HEK293 (cell line): ENCODE measurements at regions of chr2 and their contacts with region 1.

Region 1: GRCh38 chr2:68925295-68925896 is 27.3 kb downstream of the GKN2 start:
- H3K4me3 ChIP-seq: no peak overlapping the region
- H3K27ac ChIP-seq: no peak overlapping the region
- H3K4me1 ChIP-seq: no peaks in the 10 kb centered on the region
- CTCF ChIP-seq: peak; percentile 46; the same call in 1 of the 2 replicates

Region 2: DNA sequence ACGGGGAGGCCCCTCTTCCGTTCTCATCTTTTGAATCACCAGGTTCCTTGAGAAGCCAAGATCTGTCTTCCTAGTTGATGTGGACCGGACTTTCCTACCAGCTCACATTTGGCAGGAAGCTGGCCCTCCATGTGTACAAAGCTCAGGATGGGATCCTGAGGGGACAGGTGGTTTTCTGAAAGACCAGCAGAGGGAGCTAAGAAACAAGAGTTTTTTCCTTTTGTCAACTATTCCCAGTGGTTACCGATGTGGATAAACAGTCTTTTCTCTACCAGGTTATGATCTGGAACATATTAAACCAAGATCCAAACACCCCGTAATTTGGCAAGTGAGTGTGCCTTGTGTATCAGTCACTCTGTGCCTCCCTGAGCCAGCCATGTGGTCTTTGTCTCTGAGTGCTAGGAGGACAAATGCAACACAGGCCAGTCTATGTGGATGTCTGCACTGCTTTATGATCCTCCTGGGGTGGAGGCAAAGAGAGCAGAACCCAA is 215.9 kb before region 1 on chr2:
- CTCF ChIA-PET with region 1: interaction called, 80 read pairs
- POLR2A ChIA-PET with region 1: no interaction called
- H3K4me3 ChIP-seq: no peak overlapping the region
- H3K27ac ChIP-seq: no peak overlapping the region
- H3K4me1 ChIP-seq: no peaks in the 10 kb centered on the region; the same call in 1 of the 2 replicates
- CTCF ChIP-seq: 0 out of 2 replicates have a peak, but pooled peaks have one; percentile 45

Region 3: GRCh38 chr2:68715353-68716041 is 209.9 kb before region 1 on chr2:
- CTCF ChIA-PET with region 1: interaction called, 80 read pairs
- POLR2A ChIA-PET with region 1: no interaction called
- H3K4me3 ChIP-seq: no peak overlapping the region
- H3K27ac ChIP-seq: no peak overlapping the region
- H3K4me1 ChIP-seq: no peaks in the 10 kb centered on the region
- CTCF ChIP-seq: peak; percentile 26; the same call in 1 of the 2 replicates

Region 4: DNA sequence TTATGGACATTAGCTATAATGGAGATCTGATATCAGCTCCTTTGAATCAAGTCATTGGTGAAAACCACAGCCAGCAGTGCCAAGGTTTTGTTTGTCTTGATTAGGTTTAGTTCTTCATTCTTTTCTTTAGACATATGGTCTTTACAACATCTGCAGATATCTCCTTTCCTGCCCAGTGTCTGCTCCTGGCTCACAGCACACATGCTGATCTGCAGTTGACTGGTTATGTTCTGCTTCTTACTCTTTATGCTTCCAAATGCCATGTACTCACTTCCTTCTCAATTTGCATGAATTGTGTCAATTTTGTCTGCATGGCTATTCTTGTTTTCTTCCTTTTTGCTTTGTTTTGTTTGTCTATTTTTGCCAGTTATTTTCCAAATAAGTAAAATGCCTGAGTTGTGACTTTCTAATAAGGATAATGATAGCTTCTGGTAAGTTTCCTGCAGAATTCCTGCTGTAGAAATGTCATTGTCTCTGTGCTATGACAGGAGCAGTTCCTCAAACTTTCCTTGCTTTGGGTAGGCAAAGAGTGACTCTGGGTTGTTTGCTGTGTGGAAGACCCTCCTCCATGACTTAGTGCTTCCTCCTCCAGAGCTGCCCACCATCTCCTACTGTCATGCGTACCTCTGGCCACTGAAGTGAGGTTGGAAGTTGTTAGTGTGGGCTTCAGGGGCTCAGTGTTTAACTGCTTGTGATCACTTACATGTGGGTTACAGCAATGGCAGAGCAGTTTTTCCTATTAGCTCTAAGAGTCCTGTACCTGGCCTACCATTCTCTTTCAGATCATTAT is 182.6 kb before region 1 on chr2:
- CTCF ChIA-PET with region 1: interaction called, 14 read pairs
- POLR2A ChIA-PET with region 1: no interaction called
- H3K4me3 ChIP-seq: no peak overlapping the region
- H3K27ac ChIP-seq: no peak overlapping the region
- H3K4me1 ChIP-seq: no peaks in the 10 kb centered on the region
- CTCF ChIP-seq: no peak

Region 5: GRCh38 chr2:68837164-68837860 is 88.1 kb before region 1 on chr2:
- CTCF ChIA-PET with region 1: interaction called, 30 read pairs
- POLR2A ChIA-PET with region 1: no interaction called
- H3K4me3 ChIP-seq: no peak overlapping the region
- H3K27ac ChIP-seq: no peak overlapping the region
- H3K4me1 ChIP-seq: no peaks in the 10 kb centered on the region
- CTCF ChIP-seq: no peak

Region 6: GRCh38 chr2:68909793-68910674 is 15.4 kb before region 1 on chr2:
- CTCF ChIA-PET with region 1: interaction called, 14 read pairs
- POLR2A ChIA-PET with region 1: no interaction called
- H3K4me3 ChIP-seq: no peak overlapping the region
- H3K27ac ChIP-seq: no peak overlapping the region
- H3K4me1 ChIP-seq: 0 out of 2 replicates have a peak, but pooled peaks cover 2% of the 10 kb centered on the region
- CTCF ChIP-seq: peak; percentile 24; the same call in 1 of the 2 replicates